ENCODE measurements at regions of chr13 and their contacts with region 1.

Region 1: GRCh38 chr13:25037057-25037813 is 58.7 kb upstream of the PABPC3 start:
- DNase-seq: peak; percentile 40
- H3K4me3 ChIP-seq: no peak overlapping the region
- H3K27ac ChIP-seq: no peak overlapping the region
- H3K4me1 ChIP-seq: no peaks in the 10 kb centered on the region
- H3K27me3 ChIP-seq: peaks cover 5% of the 10 kb centered on the region
- CTCF ChIP-seq: peak; percentile 67

Region 2: DNA sequence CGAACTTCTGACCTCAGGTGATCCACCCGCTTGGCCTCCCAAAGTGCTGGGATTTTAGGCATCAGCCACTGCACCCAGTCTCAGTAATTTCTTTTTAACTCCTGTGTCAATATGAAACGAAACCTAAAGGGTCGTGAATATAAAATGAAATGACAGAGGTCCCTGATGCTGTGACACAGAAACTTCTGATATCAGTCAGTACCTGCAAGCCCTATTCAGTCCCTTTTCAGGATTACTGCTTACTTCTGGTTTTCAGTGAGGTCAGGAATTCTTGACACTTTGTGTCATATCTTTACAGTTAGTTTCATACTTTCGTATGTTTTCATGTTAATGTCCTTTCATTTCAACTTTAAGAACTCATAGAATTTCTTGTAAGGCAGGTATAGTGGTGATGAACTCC is 214.6 kb before region 1 on chr13:
- intact Hi-C with region 1: no loop called
- DNase-seq: no peak
- H3K4me3 ChIP-seq: no peak overlapping the region
- H3K27ac ChIP-seq: no peak overlapping the region
- H3K4me1 ChIP-seq: no peaks in the 10 kb centered on the region
- H3K27me3 ChIP-seq: no peaks in the 10 kb centered on the region
- CTCF ChIP-seq: no peak

Region 3: DNA sequence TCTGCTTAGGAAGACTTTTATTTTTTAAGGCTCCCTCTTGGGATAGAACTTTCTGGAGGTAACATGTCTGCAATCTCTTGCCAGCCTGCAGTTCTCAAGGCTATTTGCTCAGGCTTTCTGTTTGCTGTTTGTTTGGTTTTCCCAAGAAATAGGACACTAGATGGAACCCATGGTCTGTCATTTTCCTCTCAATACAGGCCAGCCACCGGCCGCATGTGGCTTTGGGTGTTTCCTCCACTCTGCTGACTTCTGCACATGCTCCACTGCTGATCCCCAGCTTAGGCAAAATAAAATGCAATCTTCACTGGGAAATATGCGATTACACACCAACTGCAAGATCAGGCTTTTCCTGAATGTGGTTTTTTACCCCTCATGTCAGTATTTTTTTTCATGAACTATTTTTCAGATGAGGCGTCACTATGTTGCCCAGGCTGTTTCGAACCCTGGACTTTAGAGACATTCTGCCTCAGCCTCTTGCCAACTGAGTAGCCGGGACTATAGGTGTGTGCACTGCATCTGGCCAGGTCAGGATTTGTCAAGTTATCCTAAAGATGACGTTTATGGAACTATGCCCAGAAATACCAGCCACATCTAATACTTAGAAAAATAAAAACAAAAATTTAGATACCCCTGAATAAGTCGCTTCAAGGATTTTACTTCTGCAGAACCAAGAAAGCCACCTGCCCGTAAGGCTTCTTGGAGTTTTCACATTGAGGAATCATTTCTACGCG is 35.6 kb before region 1 on chr13:
- intact Hi-C with region 1: loop called (anchors 2 kb)
- DNase-seq: no peak
- H3K4me3 ChIP-seq: no peak overlapping the region
- H3K27ac ChIP-seq: no peak overlapping the region
- H3K4me1 ChIP-seq: no peaks in the 10 kb centered on the region
- H3K27me3 ChIP-seq: no peaks in the 10 kb centered on the region
- CTCF ChIP-seq: no peak